ENCODE measurements at regions of chr19 and their contacts with region 1.

Region 1: GRCh38 chr19:36850559-36851442 is at the start of gene ZNF345:
- DNase-seq: peak; percentile 68 to 91 (median 84)
- ATAC-seq: peak; percentile 88 to 89 (median 88)
- H3K4me3 ChIP-seq: peak within 1 kb of the TSS; percentile 87 to 97
- H3K4me3 Mint-ChIP-seq: no peak within 1 kb of the TSS
- H3K27ac ChIP-seq: peak within 1 kb of the TSS; percentile 87
- H3K27ac Mint-ChIP-seq: no peak within 1 kb of the TSS
- H3K4me1 ChIP-seq: peaks cover 11 to 25% of the 10 kb centered on the region in 2 experiments
- H3K4me1 Mint-ChIP-seq: peaks cover 17 to 21% (median 19%) of the 10 kb centered on the region in 3 donors
- H3K27me3 ChIP-seq: no peaks in the 10 kb centered on the region
- H3K27me3 Mint-ChIP-seq: no peaks in the 10 kb centered on the region
- total RNA-seq, gene ZNF345: 8.3 to 16.4 (median 11.7) TPM

Region 2: DNA sequence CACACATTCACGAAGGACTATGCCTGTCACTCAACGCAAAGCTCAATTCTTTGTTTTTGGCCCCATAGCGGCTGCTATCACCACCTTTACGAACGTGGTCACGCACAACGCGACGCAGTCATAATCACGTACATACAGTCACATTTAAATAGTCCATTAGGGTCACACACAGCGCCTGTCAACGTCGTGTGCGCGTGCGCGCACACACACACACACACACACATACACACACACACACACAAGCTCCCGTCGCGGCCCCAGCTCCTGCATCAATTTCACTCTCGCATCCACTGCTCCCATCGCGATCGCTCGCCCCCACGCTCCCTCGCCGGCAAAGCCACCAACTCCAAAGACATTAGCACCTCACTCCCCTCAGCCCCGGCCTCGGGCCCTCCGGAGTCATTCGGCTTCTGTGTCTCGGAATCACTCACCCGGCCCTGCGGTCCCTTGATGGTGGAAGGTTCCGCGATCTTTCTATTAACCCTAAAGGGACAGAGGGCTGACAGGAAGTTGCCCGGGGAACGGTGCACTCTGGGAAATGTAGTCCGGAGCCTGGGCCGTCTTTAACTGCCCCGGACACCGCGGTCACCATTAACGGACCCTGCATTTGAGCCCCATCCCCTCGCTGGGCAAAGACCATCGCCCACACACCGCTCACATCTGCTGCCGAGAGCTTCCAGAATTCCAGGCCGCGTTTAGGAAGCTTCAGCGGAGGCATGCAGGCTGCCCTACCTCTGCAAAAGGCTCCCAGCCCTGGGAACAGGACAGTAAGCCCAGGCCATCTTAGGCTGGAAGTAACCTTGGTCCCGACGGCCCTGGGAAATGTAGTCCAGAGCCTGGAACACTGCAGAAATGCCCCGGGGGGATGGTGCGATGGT is 12.7 kb before region 1 on chr19 and contains the start of gene ZNF790:
- CTCF ChIA-PET with region 1: interaction called, 3 to 5 read pairs
- POLR2A ChIA-PET with region 1: interaction called, 10 to 26 read pairs
- DNase-seq: peak; percentile 71 to 87 (median 80)
- ATAC-seq: peak; percentile 89 to 91 (median 90)
- H3K4me3 ChIP-seq: peak within 1 kb of the TSS; percentile 75 to 81
- H3K4me3 Mint-ChIP-seq: no peak within 1 kb of the TSS
- H3K27ac ChIP-seq: peak within 1 kb of the TSS; percentile 90
- H3K27ac Mint-ChIP-seq: peak within 1 kb of the TSS in 1 of 2 donors; percentile 16
- H3K4me1 ChIP-seq: peaks cover 5 to 14% of the 10 kb centered on the region in 2 experiments
- H3K4me1 Mint-ChIP-seq: peaks cover 0 to 9% (median 8%) of the 10 kb centered on the region in 3 donors
- H3K27me3 ChIP-seq: no peaks in the 10 kb centered on the region
- H3K27me3 Mint-ChIP-seq: no peaks in the 10 kb centered on the region
- total RNA-seq, gene ZNF790: 4.7 to 12.9 (median 11.7) TPM

Region 3: DNA sequence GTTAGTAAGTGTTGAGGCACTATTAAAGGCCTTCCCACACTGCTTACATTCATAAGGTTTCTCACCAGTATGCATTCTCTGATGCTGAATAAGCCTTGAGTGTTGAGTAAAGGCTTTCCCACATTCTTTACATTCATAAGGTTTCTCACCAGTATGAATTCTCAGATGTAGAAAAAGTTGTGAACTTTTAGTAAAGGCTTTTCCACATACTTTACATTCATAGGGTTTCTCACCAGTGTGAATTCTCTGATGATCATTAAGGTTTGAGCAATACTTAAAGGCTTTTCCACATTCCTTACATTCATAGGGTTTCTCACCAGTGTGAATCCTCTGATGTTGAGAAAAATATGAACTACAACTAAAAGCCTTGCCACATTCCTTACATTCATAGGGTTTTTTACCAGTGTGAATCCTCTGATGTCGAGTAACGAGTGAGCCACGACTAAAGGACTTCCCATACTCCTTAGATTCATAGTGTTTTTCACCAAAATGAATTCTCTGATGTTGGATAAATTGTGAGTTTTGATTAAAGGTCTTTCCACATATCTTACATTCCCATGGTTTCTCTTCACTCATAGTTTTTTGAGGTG is 41.1 kb after region 1 on chr19:
- CTCF ChIA-PET with region 1: no interaction called
- POLR2A ChIA-PET with region 1: no interaction called
- DNase-seq: no peak
- ATAC-seq: no peak
- H3K4me3 ChIP-seq: no peak overlapping the region
- H3K4me3 Mint-ChIP-seq: no peak overlapping the region
- H3K27ac ChIP-seq: no peak overlapping the region
- H3K27ac Mint-ChIP-seq: no peak overlapping the region
- H3K4me1 ChIP-seq: no peaks in the 10 kb centered on the region
- H3K4me1 Mint-ChIP-seq: no peaks in the 10 kb centered on the region
- H3K27me3 ChIP-seq: no peaks in the 10 kb centered on the region
- H3K27me3 Mint-ChIP-seq: no peaks in the 10 kb centered on the region

Region 4: DNA sequence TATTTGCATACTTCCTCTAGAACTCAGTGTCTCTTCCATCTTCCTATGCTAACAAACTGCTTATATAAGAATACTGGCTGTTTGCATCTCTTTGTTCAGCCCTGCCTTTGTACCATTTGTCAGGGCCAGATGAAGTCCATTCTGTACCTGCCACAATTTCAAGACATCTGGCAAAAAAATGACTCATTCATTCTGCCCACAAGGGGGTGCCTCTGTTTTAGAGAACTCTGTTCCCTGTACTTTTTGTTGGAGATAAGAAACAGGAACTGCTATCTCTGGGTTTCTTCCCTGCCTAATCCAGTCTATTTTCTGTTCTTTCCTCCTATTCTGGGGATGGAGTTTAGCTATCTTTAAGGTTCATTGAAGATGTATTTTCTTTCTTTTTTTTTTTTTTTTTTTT is 88.4 kb after region 1 on chr19:
- CTCF ChIA-PET with region 1: no interaction called
- POLR2A ChIA-PET with region 1: no interaction called
- DNase-seq: no peak
- ATAC-seq: no peak
- H3K4me3 ChIP-seq: no peak overlapping the region
- H3K4me3 Mint-ChIP-seq: no peak overlapping the region
- H3K27ac ChIP-seq: no peak overlapping the region
- H3K27ac Mint-ChIP-seq: no peak overlapping the region
- H3K4me1 ChIP-seq: no peaks in the 10 kb centered on the region
- H3K4me1 Mint-ChIP-seq: no peaks in the 10 kb centered on the region
- H3K27me3 ChIP-seq: no peaks in the 10 kb centered on the region
- H3K27me3 Mint-ChIP-seq: no peaks in the 10 kb centered on the region

Measured in T-cell (primary cell).